CD14-positive monocyte (primary cell): ENCODE measurements at regions of chr17 and their contacts with region 1.

Region 1: DNA sequence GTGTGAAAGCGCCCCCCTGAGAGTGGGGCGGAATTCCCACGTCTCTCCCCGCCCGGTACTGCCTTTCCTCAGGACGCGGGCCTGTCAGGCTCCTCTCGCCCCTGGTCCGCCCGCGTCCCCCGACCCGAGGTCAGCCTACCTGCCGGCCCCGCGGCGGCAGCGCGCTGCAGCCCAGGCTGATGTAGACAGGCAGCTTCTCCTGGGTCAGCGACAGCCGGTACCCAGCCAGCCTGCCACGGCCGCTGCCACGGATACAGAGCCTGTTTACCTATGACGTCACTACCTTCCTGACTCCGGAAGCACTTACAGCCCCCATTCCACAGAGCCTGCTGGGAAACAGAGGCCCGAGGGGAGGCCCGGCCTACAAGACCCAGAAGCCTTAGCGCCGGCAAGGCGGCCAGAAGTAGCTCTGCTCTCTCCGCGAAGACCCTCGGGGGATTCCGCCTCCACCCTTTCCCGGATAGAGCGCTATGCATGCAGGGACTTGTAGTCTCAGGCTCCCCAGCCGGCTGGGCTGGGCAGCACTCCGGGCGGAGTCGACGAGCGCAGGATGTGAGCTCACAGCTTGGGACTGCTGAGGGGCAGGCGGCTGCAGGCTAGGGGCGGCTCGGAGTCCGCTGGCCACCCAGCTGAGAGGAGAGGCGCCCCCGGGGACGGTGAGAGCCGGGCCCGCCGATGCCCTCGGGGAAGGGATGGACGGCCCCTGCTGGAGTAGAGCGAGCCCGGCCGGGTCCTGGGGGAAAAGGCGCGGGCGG is at the starts of genes IFT20 and TNFAIP1:
- DNase-seq: peak; percentile 99 to 100 (median 99)
- H3K4me3 ChIP-seq: peak within 1 kb of the TSS; percentile 62 to 93 (median 76)
- H3K4me3 Mint-ChIP-seq: peak within 1 kb of the TSS; percentile 93 to 96
- H3K27ac ChIP-seq: peak within 1 kb of the TSS; percentile 57 to 96
- H3K27ac Mint-ChIP-seq: peak within 1 kb of the TSS; percentile 92 to 98 (median 96)
- H3K4me1 ChIP-seq: peaks cover 31 to 36% of the 10 kb centered on the region in 2 donors
- H3K4me1 Mint-ChIP-seq: peaks cover 40% of the 10 kb centered on the region
- H3K27me3 ChIP-seq: no peaks in the 10 kb centered on the region
- H3K27me3 Mint-ChIP-seq: peaks cover 0 to 1% (median 0%) of the 10 kb centered on the region in 3 donors
- CTCF ChIP-seq: no peak
- polyA plus RNA-seq, gene IFT20: 61.1 to 79.1 (median 75.4) TPM
- polyA plus RNA-seq, gene TNFAIP1: 7.2 to 9.5 (median 9.4) TPM

Region 2: DNA sequence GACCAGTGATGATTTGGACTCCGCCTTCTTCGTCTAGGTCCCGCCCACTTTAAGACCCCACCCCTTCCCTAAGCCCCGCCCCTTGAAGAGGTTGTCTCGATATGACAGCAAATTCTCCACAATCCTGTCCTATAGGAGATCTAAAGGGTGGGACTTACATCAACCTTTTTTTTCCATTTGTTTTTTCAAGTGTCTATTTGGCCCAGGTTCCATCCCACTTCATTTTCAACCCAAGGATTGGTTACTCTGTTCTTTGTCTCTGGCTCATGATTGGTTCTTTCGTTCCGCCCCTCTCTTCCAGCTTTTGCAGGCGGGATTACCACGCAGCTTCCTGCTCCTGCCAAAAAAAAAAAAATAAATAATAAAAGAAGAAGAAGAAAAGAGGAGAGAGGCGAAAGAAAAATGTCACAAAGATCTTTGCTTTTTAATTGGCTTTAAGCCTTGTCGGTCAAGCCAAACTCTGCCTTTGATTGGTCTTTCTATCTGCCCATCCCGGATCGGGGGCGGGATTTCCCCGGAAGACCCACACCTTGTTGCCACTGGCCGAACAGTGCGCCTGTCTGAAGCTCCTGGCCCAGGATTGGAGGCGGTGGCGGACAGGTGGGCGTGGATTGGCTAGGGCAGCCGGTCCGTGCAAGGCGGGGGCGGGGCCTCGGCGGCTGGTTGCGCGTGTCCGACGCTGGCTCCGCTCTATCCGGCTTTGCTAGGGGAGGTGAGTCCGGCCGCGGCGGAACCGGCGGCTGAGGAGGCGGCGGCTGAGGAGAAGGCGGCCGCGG is 294.1 kb before region 1 on chr17:
- intact Hi-C with region 1: loop called in 1 of 2 experiments (anchors 10 kb)
- DNase-seq: peak; percentile 99
- H3K4me3 ChIP-seq: peak overlapping the region; percentile 75 to 82 (median 80)
- H3K4me3 Mint-ChIP-seq: peak overlapping the region; percentile 65 to 79
- H3K27ac ChIP-seq: peak overlapping the region; percentile 59 to 78
- H3K27ac Mint-ChIP-seq: peak overlapping the region; percentile 85 to 96 (median 90)
- H3K4me1 ChIP-seq: peaks cover 36 to 45% of the 10 kb centered on the region in 2 donors
- H3K4me1 Mint-ChIP-seq: peaks cover 49% of the 10 kb centered on the region
- H3K27me3 ChIP-seq: no peaks in the 10 kb centered on the region
- H3K27me3 Mint-ChIP-seq: peaks cover 2 to 16% (median 6%) of the 10 kb centered on the region in 3 donors
- CTCF ChIP-seq: no peak

Region 3: GRCh38 chr17:28324267-28324745 is 11.1 kb before region 1 on chr17:
- intact Hi-C with region 1: loop called in 1 of 2 experiments (anchors 2 kb)
- DNase-seq: no peak
- H3K4me3 ChIP-seq: no peak overlapping the region
- H3K4me3 Mint-ChIP-seq: no peak overlapping the region
- H3K27ac ChIP-seq: peak overlapping the region in 1 of 2 donors; percentile 36
- H3K27ac Mint-ChIP-seq: peak overlapping the region in 4 of 7 donors; percentile 41 to 78 (median 59)
- H3K4me1 ChIP-seq: peaks cover 24 to 29% of the 10 kb centered on the region in 2 donors
- H3K4me1 Mint-ChIP-seq: peaks cover 28% of the 10 kb centered on the region
- H3K27me3 ChIP-seq: no peaks in the 10 kb centered on the region
- H3K27me3 Mint-ChIP-seq: no peaks in the 10 kb centered on the region
- CTCF ChIP-seq: no peak

Region 4: DNA sequence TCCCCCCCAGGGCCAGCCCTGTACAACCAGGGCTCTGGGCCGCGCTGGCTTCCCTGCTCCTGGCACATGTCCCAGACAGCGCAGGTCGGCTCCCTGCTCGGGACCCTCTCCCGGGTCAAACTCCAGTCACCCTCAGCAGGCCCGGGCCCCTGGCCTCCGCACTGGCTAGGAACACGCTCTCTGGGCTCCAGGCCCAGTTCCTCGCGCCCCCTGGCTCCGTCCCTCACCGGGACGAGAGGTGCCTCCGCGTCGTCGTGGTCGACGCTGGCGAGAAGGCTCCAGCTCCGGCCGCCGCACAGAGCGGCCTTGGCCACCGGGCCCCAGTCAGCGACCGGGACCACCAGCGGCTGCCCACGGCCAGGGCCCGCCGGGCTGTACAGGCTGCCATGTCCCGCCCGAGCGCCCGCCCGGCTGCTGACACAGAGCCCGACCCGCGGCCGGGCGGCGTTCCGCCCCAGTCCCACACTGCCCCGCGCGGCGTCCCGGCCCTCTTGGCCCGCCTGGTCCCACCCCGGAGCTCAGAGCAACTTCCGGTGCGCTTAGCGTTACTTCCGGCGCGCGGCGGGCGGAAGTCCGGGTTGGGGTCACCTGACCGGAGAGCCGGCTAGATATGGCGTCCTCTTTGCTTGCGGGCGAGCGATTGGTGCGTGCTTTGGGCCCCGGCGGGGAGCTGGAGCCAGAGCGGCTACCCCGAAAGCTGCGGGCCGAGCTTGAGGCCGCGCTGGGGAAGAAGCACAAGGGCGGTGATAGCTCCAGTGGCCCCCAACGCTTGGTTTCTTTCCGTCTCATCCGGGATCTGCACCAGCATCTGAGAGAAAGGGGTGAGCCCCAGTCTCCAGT is 21.9 kb after region 1 on chr17 and contains the start of gene POLDIP2:
- intact Hi-C with region 1: loop called (anchors 1 kb)
- DNase-seq: peak; percentile 94 to 95 (median 94)
- H3K4me3 ChIP-seq: peak within 1 kb of the TSS; percentile 82 to 93 (median 88)
- H3K4me3 Mint-ChIP-seq: peak within 1 kb of the TSS; percentile 90 to 96
- H3K27ac ChIP-seq: peak within 1 kb of the TSS; percentile 70 to 92
- H3K27ac Mint-ChIP-seq: peak within 1 kb of the TSS; percentile 90 to 99 (median 95)
- H3K4me1 ChIP-seq: peaks cover 19 to 23% of the 10 kb centered on the region in 2 donors
- H3K4me1 Mint-ChIP-seq: peaks cover 20% of the 10 kb centered on the region
- H3K27me3 ChIP-seq: no peaks in the 10 kb centered on the region
- H3K27me3 Mint-ChIP-seq: no peaks in the 10 kb centered on the region
- CTCF ChIP-seq: no peak
- polyA plus RNA-seq, gene POLDIP2: 31.5 to 76.9 (median 72.4) TPM

Region 5: DNA sequence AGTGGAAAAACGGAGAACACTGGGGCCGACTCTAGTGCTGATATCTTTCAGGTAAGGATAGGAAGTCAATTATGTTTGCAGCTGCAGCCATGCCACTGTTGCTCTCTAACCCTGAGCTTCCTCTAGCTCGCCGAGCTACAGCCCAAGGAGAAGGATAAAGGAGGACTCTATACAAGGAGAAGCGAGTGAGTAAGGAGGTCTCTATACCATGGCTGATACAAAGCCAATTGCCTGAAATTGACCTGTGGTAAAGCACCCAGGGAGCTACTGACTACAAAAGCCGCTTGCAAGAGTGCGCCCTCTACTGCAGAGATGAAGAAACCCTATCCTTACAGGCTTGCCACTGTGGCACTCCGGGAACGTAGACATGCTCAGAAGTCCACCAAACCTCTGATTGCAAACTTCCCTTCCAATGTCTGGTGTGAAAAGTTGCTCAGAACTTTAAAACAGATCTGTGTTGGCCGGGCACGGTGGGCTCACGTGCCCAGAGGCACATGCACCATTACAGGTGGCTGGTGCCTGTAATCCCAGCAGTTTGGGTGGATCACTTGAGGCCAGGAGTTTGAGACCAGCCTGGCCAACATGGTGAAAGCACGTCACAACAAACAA is 81.4 kb after region 1 on chr17:
- intact Hi-C with region 1: no loop called
- DNase-seq: peak; percentile 32 to 48 (median 47)
- H3K4me3 ChIP-seq: no peak overlapping the region
- H3K4me3 Mint-ChIP-seq: no peak overlapping the region
- H3K27ac ChIP-seq: no peak overlapping the region
- H3K27ac Mint-ChIP-seq: no peak overlapping the region
- H3K4me1 ChIP-seq: no peaks in the 10 kb centered on the region
- H3K4me1 Mint-ChIP-seq: peaks cover 6% of the 10 kb centered on the region
- H3K27me3 ChIP-seq: no peaks in the 10 kb centered on the region
- H3K27me3 Mint-ChIP-seq: peaks cover 4 to 11% (median 4%) of the 10 kb centered on the region in 3 donors
- CTCF ChIP-seq: peak; percentile 86

Region 6: GRCh38 chr17:28571255-28572122 is 236.1 kb after region 1 on chr17 and contains the start of gene PIGS:
- intact Hi-C with region 1: loop called in 1 of 2 experiments (anchors 10 kb)
- DNase-seq: peak; percentile 90
- H3K4me3 ChIP-seq: peak within 1 kb of the TSS; percentile 69 to 92 (median 89)
- H3K4me3 Mint-ChIP-seq: peak within 1 kb of the TSS; percentile 93 to 96
- H3K27ac ChIP-seq: peak within 1 kb of the TSS; percentile 35 to 71
- H3K27ac Mint-ChIP-seq: peak within 1 kb of the TSS; percentile 82 to 91 (median 86)
- H3K4me1 ChIP-seq: peaks cover 34 to 49% of the 10 kb centered on the region in 2 donors
- H3K4me1 Mint-ChIP-seq: peaks cover 50% of the 10 kb centered on the region
- H3K27me3 ChIP-seq: no peaks in the 10 kb centered on the region
- H3K27me3 Mint-ChIP-seq: peaks cover 2 to 4% (median 3%) of the 10 kb centered on the region in 3 donors
- CTCF ChIP-seq: no peak
- polyA plus RNA-seq, gene PIGS: 59.4 to 87.5 (median 84.9) TPM

Region 7: GRCh38 chr17:28951991-28952975 is 616.9 kb after region 1 on chr17:
- intact Hi-C with region 1: loop called in 1 of 2 experiments (anchors 5 kb)
- DNase-seq: peak; percentile 99 to 100 (median 99)
- H3K4me3 ChIP-seq: peak overlapping the region; percentile 53 to 98 (median 68)
- H3K4me3 Mint-ChIP-seq: no peak overlapping the region
- H3K27ac ChIP-seq: peak overlapping the region; percentile 95 to 96
- H3K27ac Mint-ChIP-seq: no peak overlapping the region
- H3K4me1 ChIP-seq: peaks cover 31 to 35% of the 10 kb centered on the region in 2 donors
- H3K4me1 Mint-ChIP-seq: peaks cover 15% of the 10 kb centered on the region
- H3K27me3 ChIP-seq: no peaks in the 10 kb centered on the region
- H3K27me3 Mint-ChIP-seq: peaks cover 0 to 3% (median 3%) of the 10 kb centered on the region in 3 donors
- CTCF ChIP-seq: no peak